ENCODE measurements at regions of chr2 and their contacts with region 1.

Region 1: DNA sequence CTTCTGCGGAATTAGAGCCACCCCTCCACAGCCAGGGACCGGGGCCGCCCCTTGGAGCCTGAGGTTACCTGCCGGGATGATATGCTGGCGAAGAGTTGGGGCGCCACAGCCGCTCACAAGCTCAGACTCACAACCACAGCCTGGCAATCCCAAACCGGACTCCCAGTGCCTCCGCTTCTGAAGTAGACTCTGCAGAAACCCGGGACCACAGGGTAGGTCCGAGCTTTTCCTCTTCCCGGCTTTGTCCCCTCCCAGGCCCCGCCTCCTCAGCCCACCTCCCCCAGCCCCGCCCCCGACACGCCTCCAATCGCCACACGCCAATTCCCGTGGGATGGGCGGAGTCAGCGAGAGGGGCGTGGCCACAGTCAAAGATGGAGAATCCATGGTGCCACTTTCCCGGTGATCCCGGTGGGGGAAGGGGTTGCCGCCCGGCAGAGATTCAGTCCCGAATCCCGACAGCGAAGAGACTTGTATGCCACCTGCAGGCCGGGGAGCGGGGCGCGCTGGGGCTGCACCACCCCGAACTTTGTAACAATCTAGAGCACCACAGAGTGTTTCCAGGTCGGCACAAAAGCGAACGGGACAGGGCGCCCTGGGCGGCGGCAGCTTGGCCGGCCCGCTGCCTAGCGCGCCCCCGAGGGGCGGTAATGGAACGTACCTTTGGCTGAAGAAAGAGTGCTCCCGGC is at the start of gene IDH1:
- DNase-seq: peak; percentile 94
- ATAC-seq: peak; percentile 80
- H3K4me3 ChIP-seq: peak within 1 kb of the TSS; percentile 83 to 99 (median 93)
- H3K4me3 Mint-ChIP-seq: peak within 1 kb of the TSS; percentile 99
- H3K27ac ChIP-seq: peak within 1 kb of the TSS; percentile 47 to 65
- H3K27ac Mint-ChIP-seq: peak within 1 kb of the TSS; percentile 86
- H3K4me1 ChIP-seq: peaks cover 30 to 41% of the 10 kb centered on the region in 2 donors
- H3K4me1 Mint-ChIP-seq: peaks cover 52% of the 10 kb centered on the region
- H3K27me3 ChIP-seq: no peaks in the 10 kb centered on the region
- H3K27me3 Mint-ChIP-seq: no peaks in the 10 kb centered on the region
- CTCF ChIP-seq: peak; percentile 33
- total RNA-seq, gene IDH1: 41.4 TPM in 2 replicates

Region 2: GRCh38 chr2:207769597-207770486 is 485.2 kb before region 1 on chr2 and contains the start of gene FZD5:
- CTCF ChIA-PET with region 1: no interaction called
- POLR2A ChIA-PET with region 1: no interaction called
- intact Hi-C with region 1: loop called (anchors 2 kb)
- DNase-seq: peak; percentile 89
- ATAC-seq: peak; percentile 88
- H3K4me3 ChIP-seq: peak within 1 kb of the TSS; percentile 55 to 87 (median 65)
- H3K4me3 Mint-ChIP-seq: peak within 1 kb of the TSS; percentile 89
- H3K27ac ChIP-seq: no peak within 1 kb of the TSS
- H3K27ac Mint-ChIP-seq: peak within 1 kb of the TSS; percentile 80
- H3K4me1 ChIP-seq: peaks cover 32 to 44% of the 10 kb centered on the region in 2 donors
- H3K4me1 Mint-ChIP-seq: peaks cover 36% of the 10 kb centered on the region
- H3K27me3 ChIP-seq: peaks cover 0 to 15% (median 4%) of the 10 kb centered on the region in 4 experiments
- H3K27me3 Mint-ChIP-seq: peaks cover 6% of the 10 kb centered on the region
- CTCF ChIP-seq: peak; percentile 33
- total RNA-seq, gene FZD5: 1.8 and 2.5 TPM in 2 replicates

Region 3: GRCh38 chr2:208175069-208175839 is 79.8 kb before region 1 on chr2:
- CTCF ChIA-PET with region 1: interaction called, 21 read pairs
- POLR2A ChIA-PET with region 1: no interaction called
- intact Hi-C with region 1: loop called (anchors 1 kb)
- DNase-seq: peak; percentile 68
- ATAC-seq: peak; percentile 90
- H3K4me3 ChIP-seq: no peak overlapping the region
- H3K4me3 Mint-ChIP-seq: no peak overlapping the region
- H3K27ac ChIP-seq: no peak overlapping the region
- H3K27ac Mint-ChIP-seq: no peak overlapping the region
- H3K4me1 ChIP-seq: no peaks in the 10 kb centered on the region
- H3K4me1 Mint-ChIP-seq: peaks cover 3% of the 10 kb centered on the region
- H3K27me3 ChIP-seq: peaks cover 0 to 5% (median 0%) of the 10 kb centered on the region in 4 experiments
- H3K27me3 Mint-ChIP-seq: peaks cover 21% of the 10 kb centered on the region
- CTCF ChIP-seq: peak; percentile 91

Region 4: GRCh38 chr2:208315081-208315788 is 60.2 kb after region 1 on chr2:
- CTCF ChIA-PET with region 1: interaction called, 23 read pairs
- POLR2A ChIA-PET with region 1: interaction called, 6 read pairs
- intact Hi-C with region 1: loop called (anchors 1 kb)
- DNase-seq: peak; percentile 65
- ATAC-seq: peak; percentile 52
- H3K4me3 ChIP-seq: peak overlapping the region in 3 of 5 experiments; percentile 20 to 71 (median 34)
- H3K4me3 Mint-ChIP-seq: peak overlapping the region; percentile 84
- H3K27ac ChIP-seq: peak overlapping the region; percentile 76 to 96
- H3K27ac Mint-ChIP-seq: peak overlapping the region; percentile 95
- H3K4me1 ChIP-seq: peaks cover 65 to 78% of the 10 kb centered on the region in 2 donors
- H3K4me1 Mint-ChIP-seq: peaks cover 75% of the 10 kb centered on the region
- H3K27me3 ChIP-seq: no peaks in the 10 kb centered on the region
- H3K27me3 Mint-ChIP-seq: no peaks in the 10 kb centered on the region
- CTCF ChIP-seq: peak; percentile 16

Region 5: GRCh38 chr2:208320686-208321085 is 65.7 kb after region 1 on chr2:
- CTCF ChIA-PET with region 1: interaction called, 23 read pairs
- POLR2A ChIA-PET with region 1: no interaction called
- intact Hi-C with region 1: loop called (anchors 1 kb)
- DNase-seq: peak; percentile 64
- ATAC-seq: peak; percentile 82
- H3K4me3 ChIP-seq: peak overlapping the region; percentile 18 to 63 (median 38)
- H3K4me3 Mint-ChIP-seq: peak overlapping the region; percentile 82
- H3K27ac ChIP-seq: peak overlapping the region; percentile 67 to 87
- H3K27ac Mint-ChIP-seq: peak overlapping the region; percentile 90
- H3K4me1 ChIP-seq: peaks cover 49 to 51% of the 10 kb centered on the region in 2 donors
- H3K4me1 Mint-ChIP-seq: peaks cover 68% of the 10 kb centered on the region
- H3K27me3 ChIP-seq: no peaks in the 10 kb centered on the region
- H3K27me3 Mint-ChIP-seq: no peaks in the 10 kb centered on the region
- CTCF ChIP-seq: no peak